ENCODE measurements at regions of chr1 and their contacts with region 1.

Region 1: GRCh38 chr1:23216771-23217420 is 406 bp downstream of the HTR1D start:
- DNase-seq: peak in 1 of 2 experiments; percentile 50
- H3K4me3 ChIP-seq: peak overlapping the region; percentile 66
- H3K27ac ChIP-seq: no peak overlapping the region
- H3K4me1 ChIP-seq: peaks cover 22% of the 10 kb centered on the region; the same call in 1 of the 2 replicates
- H3K27me3 ChIP-seq: no peaks in the 10 kb centered on the region
- CTCF ChIP-seq: peak; percentile 79

Region 2: DNA sequence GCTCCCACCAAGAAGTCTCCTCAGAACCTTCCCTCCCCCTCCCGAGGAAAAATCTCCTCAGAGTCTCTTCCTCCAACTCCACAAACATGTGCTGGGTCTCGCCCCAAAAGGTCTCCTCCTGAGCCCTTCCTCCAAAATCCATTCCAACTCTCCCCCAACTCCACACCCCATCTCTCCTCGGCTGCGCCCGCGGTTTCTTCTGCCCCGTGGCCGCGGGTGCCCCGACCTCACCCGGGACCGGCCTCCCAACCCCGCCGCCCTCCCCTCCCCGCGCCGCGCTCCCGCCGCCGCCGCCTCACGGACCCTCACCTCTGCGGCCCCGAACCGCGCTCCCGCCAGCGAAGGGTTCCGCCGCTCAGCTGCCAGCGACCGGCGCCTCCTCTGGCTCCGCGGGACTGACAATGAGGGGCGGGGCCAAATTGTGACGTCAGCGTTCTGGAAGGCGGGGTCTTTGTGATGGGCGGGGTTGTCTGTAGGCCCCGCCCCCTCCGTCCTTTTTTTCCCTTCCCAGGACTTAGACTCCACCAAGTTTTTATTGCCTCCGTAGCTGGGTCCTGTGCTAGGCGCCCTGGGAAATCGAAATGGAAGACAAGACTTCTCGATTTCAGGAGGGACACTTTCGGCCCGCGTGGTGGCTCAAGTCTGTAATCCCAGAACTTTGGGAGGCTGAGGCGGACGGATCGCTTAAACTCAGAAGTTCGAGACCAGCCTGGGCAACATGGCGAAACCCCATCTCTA is 48.3 kb before region 1 on chr1 and contains the start of gene LUZP1:
- CTCF ChIA-PET with region 1: no interaction called
- POLR2A ChIA-PET with region 1: interaction called, 23 read pairs
- intact Hi-C with region 1: no loop called
- DNase-seq: peak; percentile 39 to 80
- H3K4me3 ChIP-seq: peak within 1 kb of the TSS; percentile 75
- H3K27ac ChIP-seq: peak within 1 kb of the TSS; percentile 58
- H3K4me1 ChIP-seq: peaks cover 6% of the 10 kb centered on the region
- H3K27me3 ChIP-seq: no peaks in the 10 kb centered on the region
- CTCF ChIP-seq: no peak
- total RNA-seq, gene LUZP1: 35.0 and 37.6 TPM in 2 replicates

Region 3: DNA sequence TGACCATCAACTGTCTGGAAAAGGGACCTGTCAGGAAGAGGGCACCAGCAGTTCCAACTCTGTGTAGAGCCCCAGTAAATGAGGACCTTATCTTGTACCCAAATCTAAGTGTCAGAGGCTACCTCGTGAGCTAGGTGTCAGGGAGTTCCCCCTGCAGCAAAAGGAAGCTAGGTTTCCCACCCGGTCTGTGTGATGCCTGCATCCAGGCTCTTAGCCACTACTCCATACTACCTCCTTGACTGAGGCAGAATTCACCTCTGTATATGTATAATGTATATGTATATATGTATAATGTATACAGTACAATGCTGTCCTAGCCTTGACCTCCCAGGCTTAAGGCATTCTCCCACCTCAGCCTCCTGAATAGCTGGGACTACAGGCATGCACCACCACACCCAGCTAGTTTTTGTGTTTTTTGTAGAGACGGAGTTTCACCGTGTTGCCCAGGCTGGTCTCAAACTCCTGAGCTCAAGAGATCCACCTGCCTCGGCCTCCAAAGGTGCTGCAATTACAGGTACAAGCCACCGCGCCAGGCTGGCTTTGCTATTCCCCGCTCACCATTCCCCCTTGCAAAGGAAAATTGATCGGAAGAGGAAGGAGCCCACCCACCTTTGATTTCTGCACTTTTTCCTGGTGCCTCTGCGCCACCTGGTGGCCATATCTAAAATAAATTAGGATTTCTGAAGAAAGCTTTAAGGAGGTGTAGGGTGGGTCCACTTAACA is 32.5 kb before region 1 on chr1:
- CTCF ChIA-PET with region 1: no interaction called
- POLR2A ChIA-PET with region 1: interaction called, 7 read pairs
- intact Hi-C with region 1: loop called (anchors 2 kb)
- DNase-seq: no peak
- H3K4me3 ChIP-seq: no peak overlapping the region
- H3K27ac ChIP-seq: no peak overlapping the region
- H3K4me1 ChIP-seq: peaks cover 20% of the 10 kb centered on the region
- H3K27me3 ChIP-seq: no peaks in the 10 kb centered on the region
- CTCF ChIP-seq: peak; percentile 91